ENCODE measurements at regions of chrX and their contacts with region 1.

Region 1: DNA sequence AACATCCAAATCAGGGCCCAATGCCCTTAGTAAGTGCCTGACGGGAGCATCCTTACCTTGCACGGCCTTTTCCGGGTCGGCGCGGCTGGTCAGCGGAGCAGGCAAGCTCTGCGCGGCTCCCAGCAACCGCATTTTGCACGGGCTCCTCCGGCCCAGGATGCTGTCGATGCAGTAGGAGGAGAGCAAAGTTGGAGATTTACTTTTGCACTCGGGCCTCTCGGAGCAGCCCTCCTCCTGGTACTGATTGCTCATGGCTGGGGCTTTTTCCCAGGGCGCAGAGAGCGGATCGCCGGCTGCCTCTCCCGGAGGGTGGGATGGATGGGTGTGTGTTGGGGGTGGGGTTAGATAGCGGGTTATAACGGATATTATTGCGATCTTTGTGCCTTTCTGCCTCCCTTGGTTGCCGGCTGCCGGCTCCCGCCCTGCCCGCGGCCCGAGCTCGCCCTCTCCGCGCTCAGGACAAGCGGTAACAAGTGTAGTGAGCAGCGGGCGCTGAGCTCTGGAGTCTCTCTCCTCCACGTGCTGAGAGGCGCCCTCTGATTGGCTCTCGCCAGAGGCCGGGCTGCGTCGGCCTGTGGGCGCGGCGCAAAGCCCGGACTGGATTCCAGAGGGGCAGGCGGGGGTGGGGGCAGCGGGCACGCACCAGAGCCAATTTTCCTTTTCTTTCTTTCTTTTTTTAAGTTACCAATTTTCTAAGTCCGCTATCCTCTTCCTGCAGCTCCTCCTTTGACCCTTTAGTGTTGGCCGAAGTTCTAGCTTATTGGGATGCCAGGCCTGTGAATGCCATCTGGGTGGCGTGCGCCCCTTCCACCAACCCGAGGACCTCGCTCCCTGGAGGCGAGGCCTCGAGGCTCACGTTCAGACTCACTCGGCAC is at the start of gene ARX:
- DNase-seq: peak in 6 of 7 donors; percentile 26 to 60 (median 52)
- H3K4me3 ChIP-seq: peak within 1 kb of the TSS in 1 of 4 donors; percentile 15
- H3K27ac ChIP-seq: no peak within 1 kb of the TSS
- H3K4me1 ChIP-seq: peaks cover 0 to 4% of the 10 kb centered on the region in 2 donors
- H3K27me3 ChIP-seq: peaks cover 93% of the 10 kb centered on the region
- CTCF ChIP-seq: no peak
- POLR2A ChIP-seq: no peak
- total RNA-seq, gene ARX: 0.06 TPM in 1 of 9 donors, not detected in the others

Region 2: GRCh38 chrX:24515447-24515846 is 500.3 kb before region 1 on chrX:
- intact Hi-C with region 1: no loop called
- DNase-seq: peak in 1 of 7 donors; percentile 1
- H3K4me3 ChIP-seq: no peak overlapping the region
- H3K27ac ChIP-seq: no peak overlapping the region
- H3K4me1 ChIP-seq: no peaks in the 10 kb centered on the region
- H3K27me3 ChIP-seq: peaks cover 10% of the 10 kb centered on the region
- CTCF ChIP-seq: peak in 2 of 6 experiments; percentile 22
- POLR2A ChIP-seq: no peak

Region 3: DNA sequence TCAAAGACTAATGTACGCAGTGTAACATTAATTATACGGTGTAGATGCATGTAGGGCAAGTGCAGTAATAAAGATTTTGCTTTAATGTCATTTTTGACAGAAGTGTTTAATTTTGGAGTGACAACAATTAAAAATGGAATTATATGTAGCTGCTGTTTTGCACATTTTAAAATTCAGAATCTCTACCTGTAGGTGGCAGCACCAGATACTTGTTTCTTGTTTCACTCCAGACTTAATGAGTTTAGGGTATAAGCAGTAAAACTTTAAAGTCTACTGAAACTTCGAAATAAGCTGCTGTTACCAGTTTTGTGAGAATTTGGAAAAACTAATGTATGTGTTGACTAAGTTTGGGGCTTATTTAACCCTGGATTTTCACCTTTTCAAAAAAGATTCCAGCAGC is 177.1 kb before region 1 on chrX:
- intact Hi-C with region 1: loop called in 1 of 2 experiments (anchors 10 kb)
- DNase-seq: peak in 4 of 7 donors; percentile 9 to 25 (median 20)
- H3K4me3 ChIP-seq: no peak overlapping the region
- H3K27ac ChIP-seq: no peak overlapping the region
- H3K4me1 ChIP-seq: peaks cover 0 to 7% of the 10 kb centered on the region in 2 donors
- H3K27me3 ChIP-seq: no peaks in the 10 kb centered on the region
- CTCF ChIP-seq: peak; percentile 36 to 69 (median 45)
- POLR2A ChIP-seq: no peak